ENCODE measurements at regions of chr4 and their contacts with region 1.

Region 1: GRCh38 chr4:48085821-48086607 is 48.0 kb downstream of the TXK start:
- DNase-seq: no peak
- ATAC-seq: no peak; the same call in 2 of the 3 replicates
- H3K4me3 ChIP-seq: no peak overlapping the region
- H3K27ac ChIP-seq: no peak overlapping the region
- H3K4me1 ChIP-seq: no peaks in the 10 kb centered on the region; the same call in 1 of the 2 replicates
- H3K27me3 ChIP-seq: no peaks in the 10 kb centered on the region
- CTCF ChIP-seq: no peak
- EP300 ChIP-seq: no peak
- POLR2A ChIP-seq: no peak
- RAD21 ChIP-seq: no peak

Region 2: GRCh38 chr4:47926639-47927258 is 159.3 kb before region 1 on chr4:
- CTCF ChIA-PET with region 1: interaction called, 21 read pairs
- POLR2A ChIA-PET with region 1: no interaction called
- RAD21 ChIA-PET with region 1: interaction called, 4 read pairs
- SMC1A ChIA-PET with region 1: interaction called, 9 read pairs
- in situ Hi-C with region 1: loop called (anchors 5 kb)
- intact Hi-C with region 1: no loop called
- DNase-seq: no peak
- ATAC-seq: peak; percentile 98
- H3K4me3 ChIP-seq: no peak overlapping the region
- H3K27ac ChIP-seq: no peak overlapping the region
- H3K4me1 ChIP-seq: peaks cover 3% of the 10 kb centered on the region; the same call in 1 of the 2 replicates
- H3K27me3 ChIP-seq: no peaks in the 10 kb centered on the region; a peak in 1 of 4 replicates
- CTCF ChIP-seq: peak; percentile 72 to 77 (median 73)
- EP300 ChIP-seq: no peak
- POLR2A ChIP-seq: no peak
- RAD21 ChIP-seq: peak; percentile 73

Region 3: DNA sequence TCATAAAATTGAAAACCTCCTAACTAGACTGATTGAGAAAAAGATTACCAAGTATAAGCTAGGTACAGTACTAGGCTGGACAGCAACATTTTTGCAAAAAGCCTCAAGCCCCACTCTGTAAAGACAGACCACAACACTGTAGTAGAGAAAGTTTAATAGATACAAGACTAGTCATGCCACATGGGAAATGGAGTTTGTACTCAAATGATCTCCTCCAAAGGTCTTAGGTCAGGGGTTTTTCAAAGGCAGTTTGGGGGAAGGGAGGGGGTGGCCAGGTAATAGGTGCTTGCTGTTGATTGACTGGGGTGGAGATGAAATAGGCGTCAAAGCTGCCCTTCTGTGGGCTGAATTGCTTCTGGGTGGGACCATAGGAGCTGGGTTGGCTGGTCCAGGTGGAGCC is 83.7 kb before region 1 on chr4:
- CTCF ChIA-PET with region 1: interaction called, 129 read pairs
- POLR2A ChIA-PET with region 1: no interaction called
- RAD21 ChIA-PET with region 1: interaction called, 75 read pairs
- SMC1A ChIA-PET with region 1: interaction called, 74 read pairs
- in situ Hi-C with region 1: loop called (anchors 5 kb)
- intact Hi-C with region 1: loop called (anchors 1 kb)
- DNase-seq: no peak
- ATAC-seq: no peak
- H3K4me3 ChIP-seq: no peak overlapping the region
- H3K27ac ChIP-seq: no peak overlapping the region
- H3K4me1 ChIP-seq: no peaks in the 10 kb centered on the region
- H3K27me3 ChIP-seq: no peaks in the 10 kb centered on the region
- CTCF ChIP-seq: no peak
- EP300 ChIP-seq: no peak
- POLR2A ChIP-seq: no peak
- RAD21 ChIP-seq: no peak

Region 4: DNA sequence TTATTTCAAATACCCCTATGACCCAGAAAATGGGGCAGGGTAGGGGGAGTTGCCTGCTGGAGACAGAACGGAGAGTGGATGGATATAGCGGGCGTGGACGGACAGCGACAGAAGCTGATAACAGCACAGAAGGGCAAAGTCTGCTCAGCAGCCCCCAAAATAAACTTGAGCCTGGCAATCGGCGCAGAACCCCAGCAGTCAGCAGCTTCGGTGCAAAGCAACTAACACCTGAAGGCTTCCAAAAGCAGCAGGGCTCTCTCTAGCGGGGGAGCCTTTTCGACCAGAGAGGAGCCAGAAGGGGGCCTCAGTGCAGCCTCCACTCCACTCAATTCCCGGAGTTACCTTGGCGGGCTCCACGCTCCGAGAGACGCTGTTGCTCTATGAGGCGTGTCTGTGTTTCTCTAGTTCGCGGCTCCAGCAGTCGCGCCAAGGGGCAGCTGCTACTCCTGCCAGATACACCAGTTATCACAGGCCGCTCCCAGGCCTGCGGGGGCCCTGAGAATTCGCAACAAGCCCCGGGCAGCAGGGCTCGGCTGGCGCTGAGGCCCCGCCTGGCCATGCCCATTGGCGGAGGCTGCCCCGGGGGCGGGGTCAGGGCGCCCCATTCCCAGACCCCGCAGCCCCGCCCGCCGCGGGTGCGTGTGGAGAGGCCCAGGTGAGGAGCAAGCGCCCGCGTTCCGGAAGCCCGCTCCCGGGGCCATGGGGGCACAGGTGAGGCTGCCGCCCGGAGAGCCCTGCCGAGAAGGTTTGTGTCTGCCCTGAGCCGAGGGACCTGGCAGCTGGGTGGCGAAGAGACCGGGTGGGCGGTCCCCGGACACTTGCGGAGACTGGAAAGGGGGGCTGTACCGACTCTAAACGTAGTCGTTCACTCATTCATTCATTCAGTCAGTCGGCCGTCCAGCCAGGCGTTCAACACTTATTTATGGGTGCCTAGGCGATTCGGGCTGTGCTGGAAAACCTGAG is 69.6 kb before region 1 on chr4 and contains the starts of genes CNGA1 and NIPAL1:
- CTCF ChIA-PET with region 1: interaction called, 18 read pairs
- POLR2A ChIA-PET with region 1: no interaction called
- RAD21 ChIA-PET with region 1: interaction called, 3 read pairs
- SMC1A ChIA-PET with region 1: interaction called, 14 read pairs
- in situ Hi-C with region 1: no loop called
- intact Hi-C with region 1: loop called (anchors 1 kb)
- DNase-seq: no peak
- ATAC-seq: peak; percentile 95
- H3K4me3 ChIP-seq: peak within 1 kb of the TSS; percentile 89
- H3K27ac ChIP-seq: peak within 1 kb of the TSS; percentile 30; the same call in 1 of the 2 replicates
- H3K4me1 ChIP-seq: no peaks in the 10 kb centered on the region
- H3K27me3 ChIP-seq: no peaks in the 10 kb centered on the region; a peak in 1 of 4 replicates
- CTCF ChIP-seq: peak; percentile 41 to 52 (median 48); a peak in 5 of 6 replicates
- EP300 ChIP-seq: no peak
- POLR2A ChIP-seq: peak; percentile 63
- RAD21 ChIP-seq: peak; percentile 58
- polyA plus RNA-seq, gene CNGA1: 7.9 to 8.9 TPM
- polyA plus RNA-seq, gene NIPAL1: 1.1 to 2.0 TPM

Region 5: GRCh38 chr4:48047421-48047844 is 38.6 kb before region 1 on chr4:
- CTCF ChIA-PET with region 1: interaction called, 46 read pairs
- POLR2A ChIA-PET with region 1: no interaction called
- RAD21 ChIA-PET with region 1: interaction called, 5 read pairs
- SMC1A ChIA-PET with region 1: interaction called, 9 read pairs
- in situ Hi-C with region 1: no loop called
- intact Hi-C with region 1: no loop called
- DNase-seq: peak; percentile 84
- ATAC-seq: peak; percentile 95
- H3K4me3 ChIP-seq: peak overlapping the region; percentile 18; the same call in 1 of the 2 replicates
- H3K27ac ChIP-seq: peak overlapping the region; percentile 71
- H3K4me1 ChIP-seq: peaks cover 72% of the 10 kb centered on the region
- H3K27me3 ChIP-seq: no peaks in the 10 kb centered on the region; a peak in 1 of 4 replicates
- CTCF ChIP-seq: no peak
- EP300 ChIP-seq: peak; percentile 94 to 98
- POLR2A ChIP-seq: no peak
- RAD21 ChIP-seq: peak; percentile 36; the same call in 1 of the 2 replicates